ENCODE measurements at regions of chr12 and their contacts with region 1.

Region 1: GRCh38 chr12:2642176-2642892 is 152.4 kb upstream of the FKBP4 start:
- DNase-seq: peak in 1 of 2 donors; percentile 20
- H3K4me3 ChIP-seq: no peak overlapping the region
- CTCF ChIP-seq: no peak
- POLR2A ChIP-seq: no peak

Region 2: GRCh38 chr12:2589385-2589784 is 52.9 kb before region 1 on chr12:
- intact Hi-C with region 1: loop called (anchors 2 kb)
- DNase-seq: no peak
- H3K4me3 ChIP-seq: no peak overlapping the region
- CTCF ChIP-seq: no peak
- POLR2A ChIP-seq: no peak

Region 3: DNA sequence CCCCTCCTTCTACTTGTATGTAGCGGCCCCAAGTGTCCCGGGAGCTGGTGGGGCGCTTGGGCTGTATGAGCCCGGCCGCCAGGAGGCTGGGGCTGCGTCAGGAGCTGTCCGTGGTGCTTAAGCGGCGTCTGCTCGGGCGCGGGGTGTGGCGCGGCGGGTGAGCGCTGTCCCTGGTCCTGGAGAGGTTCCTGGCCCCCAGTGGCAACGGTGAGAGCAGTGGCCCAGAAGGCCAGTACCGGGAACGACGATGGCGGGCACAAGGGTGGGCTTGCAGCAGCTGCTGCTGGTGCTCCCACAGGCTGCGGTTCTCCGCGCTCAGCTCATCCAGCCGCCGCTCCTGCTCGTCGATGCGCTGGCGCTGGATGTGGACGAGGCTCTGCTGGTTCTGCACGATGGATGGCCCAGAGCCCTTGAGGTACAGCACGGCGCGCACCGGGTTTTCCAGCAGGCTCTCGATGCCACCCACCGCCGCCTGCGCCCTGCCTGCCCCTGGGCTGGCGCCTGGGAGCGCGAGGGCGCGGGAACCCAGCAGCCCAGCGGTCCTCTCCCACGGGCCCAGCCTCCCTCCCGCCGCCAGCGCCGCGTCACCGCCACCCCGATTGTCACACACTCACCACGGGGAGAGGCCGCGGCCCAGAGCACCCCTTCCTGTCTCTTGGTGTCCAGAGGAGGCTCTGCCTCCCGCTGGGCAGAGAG is 110.5 kb after region 1 on chr12:
- intact Hi-C with region 1: no loop called
- DNase-seq: peak; percentile 40 to 89
- H3K4me3 ChIP-seq: no peak overlapping the region
- CTCF ChIP-seq: no peak
- POLR2A ChIP-seq: no peak

Region 4: GRCh38 chr12:3060778-3061458 is 418.6 kb after region 1 on chr12:
- intact Hi-C with region 1: no loop called
- DNase-seq: no peak
- H3K4me3 ChIP-seq: no peak overlapping the region
- CTCF ChIP-seq: no peak
- POLR2A ChIP-seq: no peak